ENCODE measurements at regions of chr6 and their contacts with region 1.

Region 1: DNA sequence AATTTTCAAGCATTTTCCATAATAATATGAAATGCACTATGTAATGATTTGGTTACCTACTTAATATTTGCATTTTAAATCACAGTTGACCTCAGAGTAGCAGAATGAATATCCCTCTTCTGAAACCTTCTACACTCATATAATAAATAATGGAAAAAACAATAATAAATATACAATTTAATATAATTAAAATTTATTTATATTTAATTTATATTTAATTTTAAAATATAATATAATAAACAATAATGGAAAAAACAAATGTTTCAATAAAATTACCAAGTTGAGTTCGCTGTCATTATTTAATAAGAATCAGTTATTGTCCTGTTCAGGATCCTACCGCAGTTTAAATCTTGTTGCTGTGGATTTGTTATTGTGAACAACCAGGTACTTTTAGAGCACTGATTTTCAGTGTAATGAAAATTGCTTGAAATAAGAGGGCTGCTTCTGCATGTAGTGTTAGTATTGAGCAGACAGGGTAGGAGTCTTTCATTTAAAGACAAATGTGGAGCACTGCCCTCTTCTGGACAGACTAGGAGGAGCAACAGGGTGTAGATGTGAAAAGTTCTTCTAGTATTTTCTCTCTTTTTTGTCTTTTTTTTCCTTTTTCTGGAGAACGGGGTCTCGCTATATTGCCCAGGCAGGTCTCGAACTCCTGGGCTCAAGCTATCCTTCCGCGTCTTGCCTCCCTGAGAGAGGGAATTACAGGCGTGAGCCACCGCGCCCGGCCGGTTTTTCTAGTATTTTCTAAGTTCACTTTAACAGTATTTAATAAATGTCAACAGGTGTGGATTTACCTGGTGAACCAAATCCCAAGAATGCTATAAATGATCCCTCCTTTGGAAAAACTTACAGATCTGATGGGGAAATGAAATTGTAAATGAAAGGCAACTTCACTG is 13.6 kb downstream of the TRAPPC3L start:
- DNase-seq: peak; percentile 12 to 76 (median 61)
- ATAC-seq: peak; percentile 98
- H3K4me3 ChIP-seq: no peak overlapping the region
- H3K4me3 Mint-ChIP-seq: no peak overlapping the region
- H3K27ac ChIP-seq: no peak overlapping the region
- H3K27ac Mint-ChIP-seq: no peak overlapping the region
- H3K4me1 ChIP-seq: no peaks in the 10 kb centered on the region
- H3K4me1 Mint-ChIP-seq: no peaks in the 10 kb centered on the region
- H3K27me3 ChIP-seq: no peaks in the 10 kb centered on the region
- H3K27me3 Mint-ChIP-seq: peaks cover 15 to 56% (median 32%) of the 10 kb centered on the region in 5 donors

Region 2: GRCh38 chr6:114747987-114748630 is 1783.8 kb before region 1 on chr6:
- CTCF ChIA-PET with region 1: no interaction called
- POLR2A ChIA-PET with region 1: no interaction called
- intact Hi-C with region 1: no loop called
- DNase-seq: no peak
- ATAC-seq: no peak
- H3K4me3 ChIP-seq: no peak overlapping the region
- H3K4me3 Mint-ChIP-seq: no peak overlapping the region
- H3K27ac ChIP-seq: no peak overlapping the region
- H3K27ac Mint-ChIP-seq: no peak overlapping the region
- H3K4me1 ChIP-seq: no peaks in the 10 kb centered on the region
- H3K4me1 Mint-ChIP-seq: no peaks in the 10 kb centered on the region
- H3K27me3 ChIP-seq: no peaks in the 10 kb centered on the region
- H3K27me3 Mint-ChIP-seq: no peaks in the 10 kb centered on the region

Region 3: GRCh38 chr6:116217069-116217468 is 314.9 kb before region 1 on chr6:
- CTCF ChIA-PET with region 1: interaction called, 6 read pairs
- POLR2A ChIA-PET with region 1: no interaction called
- intact Hi-C with region 1: loop called (anchors 1 to 2 kb)
- DNase-seq: peak in 6 of 9 donors; percentile 10 to 55 (median 44)
- ATAC-seq: peak; percentile 86
- H3K4me3 ChIP-seq: no peak overlapping the region
- H3K4me3 Mint-ChIP-seq: no peak overlapping the region
- H3K27ac ChIP-seq: no peak overlapping the region
- H3K27ac Mint-ChIP-seq: peak overlapping the region in 5 of 9 donors; percentile 7 to 76 (median 44)
- H3K4me1 ChIP-seq: no peaks in the 10 kb centered on the region
- H3K4me1 Mint-ChIP-seq: peaks cover 0 to 12% (median 6%) of the 10 kb centered on the region in 7 donors
- H3K27me3 ChIP-seq: no peaks in the 10 kb centered on the region
- H3K27me3 Mint-ChIP-seq: no peaks in the 10 kb centered on the region

Region 4: GRCh38 chr6:116287689-116288282 is 244.1 kb before region 1 on chr6:
- CTCF ChIA-PET with region 1: interaction called, 11 read pairs
- POLR2A ChIA-PET with region 1: no interaction called
- intact Hi-C with region 1: loop called (anchors 1 kb)
- DNase-seq: peak in 6 of 9 donors; percentile 19 to 51 (median 41)
- ATAC-seq: peak; percentile 91
- H3K4me3 ChIP-seq: no peak overlapping the region
- H3K4me3 Mint-ChIP-seq: no peak overlapping the region
- H3K27ac ChIP-seq: no peak overlapping the region
- H3K27ac Mint-ChIP-seq: no peak overlapping the region
- H3K4me1 ChIP-seq: no peaks in the 10 kb centered on the region
- H3K4me1 Mint-ChIP-seq: peaks cover 0 to 3% (median 0%) of the 10 kb centered on the region in 7 donors
- H3K27me3 ChIP-seq: peaks cover 0 to 2% of the 10 kb centered on the region in 2 donors
- H3K27me3 Mint-ChIP-seq: peaks cover 0 to 10% (median 0%) of the 10 kb centered on the region in 5 donors

Region 5: GRCh38 chr6:116392132-116393013 is 139.6 kb before region 1 on chr6:
- CTCF ChIA-PET with region 1: no interaction called
- POLR2A ChIA-PET with region 1: no interaction called
- intact Hi-C with region 1: loop called in 1 of 2 experiments (anchors 5 kb)
- DNase-seq: peak in 2 of 9 donors; percentile 8 to 15
- ATAC-seq: peak; percentile 82
- H3K4me3 ChIP-seq: no peak overlapping the region
- H3K4me3 Mint-ChIP-seq: peak overlapping the region in 2 of 10 donors; percentile 41 to 46
- H3K27ac ChIP-seq: no peak overlapping the region
- H3K27ac Mint-ChIP-seq: peak overlapping the region in 1 of 9 donors; percentile 58
- H3K4me1 ChIP-seq: peaks cover 0 to 8% of the 10 kb centered on the region in 2 donors
- H3K4me1 Mint-ChIP-seq: peaks cover 5 to 28% (median 17%) of the 10 kb centered on the region in 7 donors
- H3K27me3 ChIP-seq: no peaks in the 10 kb centered on the region
- H3K27me3 Mint-ChIP-seq: no peaks in the 10 kb centered on the region

Region 6: GRCh38 chr6:116405138-116405537 is 126.8 kb before region 1 on chr6:
- CTCF ChIA-PET with region 1: no interaction called
- POLR2A ChIA-PET with region 1: no interaction called
- intact Hi-C with region 1: no loop called
- DNase-seq: no peak
- ATAC-seq: no peak
- H3K4me3 ChIP-seq: no peak overlapping the region
- H3K4me3 Mint-ChIP-seq: no peak overlapping the region
- H3K27ac ChIP-seq: no peak overlapping the region
- H3K27ac Mint-ChIP-seq: no peak overlapping the region
- H3K4me1 ChIP-seq: no peaks in the 10 kb centered on the region
- H3K4me1 Mint-ChIP-seq: peaks cover 0 to 6% (median 0%) of the 10 kb centered on the region in 7 donors
- H3K27me3 ChIP-seq: no peaks in the 10 kb centered on the region
- H3K27me3 Mint-ChIP-seq: peaks cover 4 to 17% (median 5%) of the 10 kb centered on the region in 5 donors

Region 7: GRCh38 chr6:116456927-116457326 is 75.0 kb before region 1 on chr6:
- CTCF ChIA-PET with region 1: no interaction called
- POLR2A ChIA-PET with region 1: no interaction called
- intact Hi-C with region 1: no loop called
- DNase-seq: no peak
- ATAC-seq: no peak
- H3K4me3 ChIP-seq: no peak overlapping the region
- H3K4me3 Mint-ChIP-seq: peak overlapping the region in 1 of 10 donors; percentile 59
- H3K27ac ChIP-seq: no peak overlapping the region
- H3K27ac Mint-ChIP-seq: peak overlapping the region in 2 of 9 donors; percentile 66 to 91
- H3K4me1 ChIP-seq: peaks cover 0 to 4% of the 10 kb centered on the region in 2 donors
- H3K4me1 Mint-ChIP-seq: peaks cover 10 to 66% (median 10%) of the 10 kb centered on the region in 7 donors
- H3K27me3 ChIP-seq: no peaks in the 10 kb centered on the region
- H3K27me3 Mint-ChIP-seq: peaks cover 6 to 46% (median 14%) of the 10 kb centered on the region in 5 donors

Region 8: GRCh38 chr6:116561377-116562018 is 29.6 kb after region 1 on chr6:
- CTCF ChIA-PET with region 1: interaction called, 8 read pairs
- POLR2A ChIA-PET with region 1: no interaction called
- intact Hi-C with region 1: loop called (anchors 1 kb)
- DNase-seq: peak; percentile 28 to 69 (median 57)
- ATAC-seq: peak; percentile 90
- H3K4me3 ChIP-seq: no peak overlapping the region
- H3K4me3 Mint-ChIP-seq: peak overlapping the region in 1 of 10 donors; percentile 40
- H3K27ac ChIP-seq: no peak overlapping the region
- H3K27ac Mint-ChIP-seq: no peak overlapping the region
- H3K4me1 ChIP-seq: no peaks in the 10 kb centered on the region
- H3K4me1 Mint-ChIP-seq: peaks cover 3 to 14% (median 10%) of the 10 kb centered on the region in 7 donors
- H3K27me3 ChIP-seq: no peaks in the 10 kb centered on the region
- H3K27me3 Mint-ChIP-seq: peaks cover 0 to 35% (median 18%) of the 10 kb centered on the region in 5 donors

Region 9: GRCh38 chr6:116847227-116847626 is 315.3 kb after region 1 on chr6:
- CTCF ChIA-PET with region 1: no interaction called
- POLR2A ChIA-PET with region 1: no interaction called
- intact Hi-C with region 1: loop called in 1 of 2 experiments (anchors 5 kb)
- DNase-seq: no peak
- ATAC-seq: no peak
- H3K4me3 ChIP-seq: no peak overlapping the region
- H3K4me3 Mint-ChIP-seq: no peak overlapping the region
- H3K27ac ChIP-seq: no peak overlapping the region
- H3K27ac Mint-ChIP-seq: no peak overlapping the region
- H3K4me1 ChIP-seq: no peaks in the 10 kb centered on the region
- H3K4me1 Mint-ChIP-seq: no peaks in the 10 kb centered on the region
- H3K27me3 ChIP-seq: no peaks in the 10 kb centered on the region
- H3K27me3 Mint-ChIP-seq: peaks cover 0 to 27% (median 7%) of the 10 kb centered on the region in 5 donors

Measured in naive thymus-derived CD4-positive, alpha-beta T cell (primary cell).